Activated T-helper 2 cell treated with anti-CD3 and anti-CD28 coated beads, Interferon-gamma antibody, Interleukin-2, Interleukin-4, amounts not matched to agents 10 μg/mL and 5 μg/mL and 100 μg/mL, durations not matched to agents 14 hours and 24 hours and 36 hours (primary cell): ENCODE measurements at regions of chr16 and their contacts with region 1.

Region 1: DNA sequence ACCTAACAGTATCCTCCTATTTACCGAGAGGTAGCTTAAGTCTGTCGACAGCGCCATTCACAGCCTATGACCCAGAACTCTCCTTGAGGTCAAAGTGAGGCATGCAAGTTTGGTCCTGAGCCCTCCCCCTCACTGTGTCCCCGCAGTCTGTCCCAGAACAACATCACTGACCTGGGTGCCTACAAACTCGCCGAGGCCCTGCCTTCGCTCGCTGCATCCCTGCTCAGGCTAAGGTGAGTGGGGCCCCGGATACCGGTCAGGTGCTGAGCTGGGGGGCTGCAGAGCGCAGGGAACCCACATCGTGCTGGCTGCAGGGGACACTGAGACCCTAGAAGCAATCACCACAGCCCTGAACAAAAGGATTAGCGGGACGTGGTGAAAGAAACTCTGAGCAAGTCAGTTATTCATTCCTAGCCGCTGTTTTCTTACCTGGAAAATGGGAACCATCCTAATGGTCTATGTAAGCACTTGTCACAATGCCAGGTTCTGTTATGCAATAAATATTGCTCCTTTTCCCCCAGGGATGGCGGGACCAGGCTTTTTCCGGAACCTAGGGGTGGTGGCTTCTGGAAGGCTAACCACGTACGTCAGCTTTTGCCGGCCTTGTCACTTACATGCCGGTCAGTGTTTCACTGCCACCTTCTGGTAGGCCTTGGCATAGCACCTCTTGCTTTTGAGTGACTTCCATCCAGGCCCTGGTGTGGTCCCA is 23.8 kb downstream of the DEXI start:
- DNase-seq: peak; percentile 74
- H3K4me3 Mint-ChIP-seq: no peak overlapping the region
- H3K27ac Mint-ChIP-seq: no peak overlapping the region
- H3K4me1 Mint-ChIP-seq: peaks cover 24% of the 10 kb centered on the region
- H3K27me3 Mint-ChIP-seq: no peaks in the 10 kb centered on the region

Region 2: GRCh38 chr16:10509534-10510025 is 408.9 kb before region 1 on chr16:
- intact Hi-C with region 1: loop called (anchors 5 kb)
- DNase-seq: peak; percentile 49
- H3K4me3 Mint-ChIP-seq: no peak overlapping the region
- H3K27ac Mint-ChIP-seq: no peak overlapping the region
- H3K4me1 Mint-ChIP-seq: peaks cover 2% of the 10 kb centered on the region
- H3K27me3 Mint-ChIP-seq: peaks cover 2% of the 10 kb centered on the region

Region 3: DNA sequence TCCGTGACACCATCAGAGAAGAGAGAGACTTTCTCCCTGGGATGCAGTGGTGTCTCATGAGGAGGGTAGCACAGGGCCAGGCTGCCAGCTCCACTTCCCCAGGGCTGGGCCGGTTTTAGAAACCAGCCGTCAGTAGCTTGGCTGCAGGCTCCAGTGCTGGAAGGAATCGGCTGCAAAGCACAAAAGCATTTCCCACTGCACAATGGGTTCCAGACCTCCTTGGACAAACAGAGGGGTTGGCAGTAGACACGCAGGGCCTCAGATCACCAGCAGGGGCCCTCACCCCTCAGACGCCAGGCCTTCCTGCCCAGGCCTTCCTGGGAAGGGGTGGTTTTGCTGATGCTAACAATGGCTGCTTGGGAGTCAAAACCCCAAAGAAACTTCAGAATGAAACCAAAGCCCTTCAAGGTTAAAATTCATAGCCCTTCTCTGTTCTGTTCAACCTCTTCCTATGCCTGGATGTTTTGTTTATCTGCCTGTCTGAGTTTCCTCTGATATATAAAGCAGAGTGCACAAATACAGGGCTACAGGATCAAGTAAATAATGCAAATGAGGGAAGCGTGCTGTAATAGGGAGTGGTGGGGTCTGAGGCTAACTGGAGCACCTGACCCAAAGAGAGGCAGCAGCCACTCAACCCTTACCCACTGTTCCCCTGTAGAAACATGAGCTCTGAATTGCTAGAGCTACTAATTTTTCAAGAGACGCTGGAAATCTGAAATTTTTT is 250.0 kb before region 1 on chr16:
- intact Hi-C with region 1: loop called (anchors 5 kb)
- DNase-seq: no peak
- H3K4me3 Mint-ChIP-seq: no peak overlapping the region
- H3K27ac Mint-ChIP-seq: no peak overlapping the region
- H3K4me1 Mint-ChIP-seq: no peaks in the 10 kb centered on the region
- H3K27me3 Mint-ChIP-seq: peaks cover 4% of the 10 kb centered on the region

Region 4: GRCh38 chr16:10812312-10813098 is 105.9 kb before region 1 on chr16:
- intact Hi-C with region 1: loop called (anchors 10 kb)
- DNase-seq: no peak
- H3K4me3 Mint-ChIP-seq: no peak overlapping the region
- H3K27ac Mint-ChIP-seq: peak overlapping the region; percentile 79
- H3K4me1 Mint-ChIP-seq: peaks cover 14% of the 10 kb centered on the region
- H3K27me3 Mint-ChIP-seq: peaks cover 9% of the 10 kb centered on the region

Region 5: DNA sequence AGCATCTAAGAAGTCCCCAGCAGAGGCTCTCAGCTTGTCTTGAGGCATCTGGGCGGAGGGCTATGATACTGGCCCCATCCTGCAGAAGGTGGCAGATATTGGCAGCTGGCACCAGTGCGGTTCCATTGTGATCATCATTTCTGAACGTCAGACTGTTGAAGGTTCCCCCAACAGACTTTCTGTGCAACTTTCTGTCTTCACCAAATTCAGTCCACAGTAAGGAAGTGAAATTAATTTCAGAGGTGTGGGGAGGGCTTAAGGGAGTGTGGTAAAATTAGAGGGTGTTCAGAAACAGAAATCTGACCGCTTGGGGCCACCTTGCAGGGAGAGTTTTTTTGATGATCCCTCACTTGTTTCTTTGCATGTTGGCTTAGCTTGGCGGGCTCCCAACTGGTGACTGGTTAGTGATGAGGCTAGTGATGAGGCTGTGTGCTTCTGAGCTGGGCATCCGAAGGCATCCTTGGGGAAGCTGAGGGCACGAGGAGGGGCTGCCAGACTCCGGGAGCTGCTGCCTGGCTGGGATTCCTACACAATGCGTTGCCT is 41.6 kb before region 1 on chr16 and contains the start of gene CIITA:
- intact Hi-C with region 1: loop called (anchors 2 kb)
- DNase-seq: peak; percentile 60
- H3K4me3 Mint-ChIP-seq: peak within 1 kb of the TSS; percentile 80
- H3K27ac Mint-ChIP-seq: peak within 1 kb of the TSS; percentile 75
- H3K4me1 Mint-ChIP-seq: peaks cover 75% of the 10 kb centered on the region
- H3K27me3 Mint-ChIP-seq: peaks cover 4% of the 10 kb centered on the region
- total RNA-seq, gene CIITA: 8.6 and 9.3 TPM in 2 replicates